ENCODE measurements at regions of chr18 and their contacts with region 1.

Region 1: DNA sequence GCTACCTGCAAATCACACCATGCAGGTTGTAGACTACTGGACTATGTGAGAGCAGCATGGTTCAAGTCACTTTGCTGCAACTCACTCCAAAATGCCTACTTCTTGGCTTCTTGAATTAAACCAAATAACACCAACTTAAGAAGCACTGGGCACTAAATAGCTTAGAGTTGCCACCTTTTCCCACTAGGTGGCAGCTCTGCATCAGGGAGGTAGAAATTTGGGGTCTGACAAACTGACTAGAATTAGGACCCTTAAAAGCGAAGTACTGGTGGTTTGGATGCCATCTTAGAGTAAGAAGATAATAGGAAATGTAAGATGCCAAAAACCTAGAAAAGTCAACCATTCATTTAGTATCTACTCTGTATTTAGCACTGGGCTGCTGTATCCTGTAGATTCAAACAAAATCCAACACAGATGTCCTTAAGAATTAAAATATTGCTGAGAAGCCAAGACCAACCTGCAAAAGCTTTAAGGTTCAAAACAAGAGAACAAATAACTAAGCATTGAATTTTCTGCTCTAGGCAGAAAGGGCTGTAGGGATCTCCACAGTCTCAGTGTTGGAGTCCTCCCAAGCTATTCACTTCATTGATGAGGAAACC is 65.5 kb downstream of the CCBE1 start:
- DNase-seq: peak; percentile 21
- H3K4me3 ChIP-seq: no peak overlapping the region
- H3K27ac ChIP-seq: no peak overlapping the region
- H3K4me1 ChIP-seq: no peaks in the 10 kb centered on the region
- H3K27me3 ChIP-seq: peaks cover 0 to under 1% of the 10 kb centered on the region in 2 experiments
- CTCF ChIP-seq: peak; percentile 30 to 38
- POLR2A ChIP-seq: no peak

Region 2: GRCh38 chr18:59459369-59460079 is 172.2 kb before region 1 on chr18:
- CTCF ChIA-PET with region 1: interaction called, 110 read pairs
- POLR2A ChIA-PET with region 1: no interaction called
- dilution Hi-C with region 1: no loop called
- intact Hi-C with region 1: no loop called
- DNase-seq: peak; percentile 28
- H3K4me3 ChIP-seq: no peak overlapping the region
- H3K27ac ChIP-seq: no peak overlapping the region
- H3K4me1 ChIP-seq: no peaks in the 10 kb centered on the region
- H3K27me3 ChIP-seq: no peaks in the 10 kb centered on the region
- CTCF ChIP-seq: peak; percentile 17 to 40
- POLR2A ChIP-seq: no peak

Region 3: GRCh38 chr18:59570101-59570775 is 61.4 kb before region 1 on chr18:
- CTCF ChIA-PET with region 1: interaction called, 10 read pairs
- POLR2A ChIA-PET with region 1: no interaction called
- dilution Hi-C with region 1: no loop called
- intact Hi-C with region 1: no loop called
- DNase-seq: no peak
- H3K4me3 ChIP-seq: no peak overlapping the region
- H3K27ac ChIP-seq: no peak overlapping the region
- H3K4me1 ChIP-seq: no peaks in the 10 kb centered on the region
- H3K27me3 ChIP-seq: no peaks in the 10 kb centered on the region
- CTCF ChIP-seq: no peak
- POLR2A ChIP-seq: no peak

Region 4: GRCh38 chr18:59646228-59646962 is 14.7 kb after region 1 on chr18:
- CTCF ChIA-PET with region 1: interaction called, 18 read pairs
- POLR2A ChIA-PET with region 1: no interaction called
- dilution Hi-C with region 1: no loop called
- intact Hi-C with region 1: no loop called
- DNase-seq: no peak
- H3K4me3 ChIP-seq: no peak overlapping the region
- H3K27ac ChIP-seq: no peak overlapping the region
- H3K4me1 ChIP-seq: no peaks in the 10 kb centered on the region
- H3K27me3 ChIP-seq: no peaks in the 10 kb centered on the region
- CTCF ChIP-seq: no peak
- POLR2A ChIP-seq: no peak

Region 5: DNA sequence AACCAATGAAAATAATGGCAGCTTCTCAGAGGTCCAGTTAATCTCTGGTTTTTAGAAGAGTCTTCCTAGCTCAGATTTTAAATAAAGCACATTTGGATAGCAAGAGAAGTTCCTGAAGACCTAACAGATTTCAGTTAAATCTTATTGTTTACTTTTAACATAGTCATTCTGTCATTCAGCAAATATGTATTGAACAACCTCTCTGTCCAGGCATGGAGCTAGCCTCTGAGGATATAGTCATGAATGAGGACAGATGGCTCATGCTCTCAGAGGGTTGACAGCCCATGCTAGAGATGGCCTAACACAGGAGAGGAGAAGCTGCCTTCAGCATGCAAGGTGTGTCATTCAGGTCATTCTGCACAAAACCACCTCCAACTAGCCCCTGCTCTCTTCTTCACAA is 59.3 kb after region 1 on chr18:
- CTCF ChIA-PET with region 1: interaction called, 129 read pairs
- POLR2A ChIA-PET with region 1: no interaction called
- dilution Hi-C with region 1: no loop called
- intact Hi-C with region 1: no loop called
- DNase-seq: no peak
- H3K4me3 ChIP-seq: no peak overlapping the region
- H3K27ac ChIP-seq: no peak overlapping the region
- H3K4me1 ChIP-seq: no peaks in the 10 kb centered on the region
- H3K27me3 ChIP-seq: peaks cover 10 to 13% of the 10 kb centered on the region in 2 experiments
- CTCF ChIP-seq: no peak
- POLR2A ChIP-seq: no peak

Region 6: GRCh38 chr18:59783138-59783537 is 151.5 kb after region 1 on chr18:
- CTCF ChIA-PET with region 1: interaction called, 10 read pairs
- POLR2A ChIA-PET with region 1: no interaction called
- dilution Hi-C with region 1: no loop called
- intact Hi-C with region 1: no loop called
- DNase-seq: peak; percentile 30
- H3K4me3 ChIP-seq: no peak overlapping the region
- H3K27ac ChIP-seq: no peak overlapping the region
- H3K4me1 ChIP-seq: no peaks in the 10 kb centered on the region
- H3K27me3 ChIP-seq: no peaks in the 10 kb centered on the region
- CTCF ChIP-seq: peak; percentile 41 to 47
- POLR2A ChIP-seq: no peak

Region 7: GRCh38 chr18:59837586-59837985 is 205.9 kb after region 1 on chr18:
- CTCF ChIA-PET with region 1: interaction called, 19 read pairs
- POLR2A ChIA-PET with region 1: no interaction called
- dilution Hi-C with region 1: no loop called
- intact Hi-C with region 1: no loop called
- DNase-seq: peak; percentile 75
- H3K4me3 ChIP-seq: no peak overlapping the region
- H3K27ac ChIP-seq: no peak overlapping the region
- H3K4me1 ChIP-seq: no peaks in the 10 kb centered on the region
- H3K27me3 ChIP-seq: peaks cover 14 to 27% of the 10 kb centered on the region in 2 experiments
- CTCF ChIP-seq: peak; percentile 82 to 83
- POLR2A ChIP-seq: no peak